Heart left ventricle (tissue), 16 donors: ENCODE measurements at regions of chr1 and their contacts with region 1.

Region 1: DNA sequence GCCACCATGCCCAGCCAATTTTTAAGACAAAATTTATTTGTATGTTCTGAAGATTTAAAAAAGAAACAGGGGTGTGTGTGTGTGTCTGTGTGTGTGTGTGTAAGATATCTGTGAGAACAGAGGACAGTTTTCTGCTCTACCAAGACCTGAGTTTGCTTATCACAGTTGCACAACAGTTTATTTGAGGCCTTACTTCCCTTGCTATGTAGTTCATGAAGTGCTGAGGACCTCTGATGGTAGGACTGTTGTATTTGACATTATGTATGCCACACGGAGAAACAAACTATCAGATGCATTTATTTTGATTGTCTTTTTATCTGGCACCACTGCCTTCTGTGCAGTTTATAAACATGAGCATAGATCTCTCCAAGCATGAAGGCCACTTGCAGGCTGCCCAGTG is 355.2 kb downstream of the PBX1 start:
- DNase-seq: no peak
- ATAC-seq: peak; percentile 79 to 84 (median 83)
- H3K4me3 ChIP-seq: no peak overlapping the region
- H3K27ac ChIP-seq: no peak overlapping the region
- H3K4me1 ChIP-seq: peaks cover 0 to 13% (median 0%) of the 10 kb centered on the region in 12 donors
- H3K27me3 ChIP-seq: no peaks in the 10 kb centered on the region
- CTCF ChIP-seq: peak in 9 of 12 donors; percentile 31 to 54 (median 43)
- POLR2A ChIP-seq: no peak

Region 2: DNA sequence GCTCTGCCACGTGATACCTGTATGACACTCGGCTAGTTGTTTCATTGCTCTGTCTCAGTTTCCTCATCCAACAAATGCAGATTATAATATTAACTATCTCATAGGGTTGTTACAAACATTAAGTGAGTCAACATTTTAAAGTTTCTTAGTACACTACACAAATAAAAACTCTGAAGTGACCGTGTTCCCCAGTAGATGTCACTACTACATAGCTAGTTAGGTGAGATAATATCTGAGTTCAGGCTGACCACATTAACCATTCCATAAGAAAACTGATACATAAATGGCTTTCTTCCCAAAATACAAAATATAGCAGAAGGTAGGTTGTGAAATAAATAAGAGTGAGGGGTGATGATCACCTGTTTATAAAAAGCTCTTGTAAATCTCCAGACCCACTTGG is 1378.4 kb before region 1 on chr1:
- intact Hi-C with region 1: loop called in 1 of 10 experiments (anchors 10 kb)
- DNase-seq: no peak
- ATAC-seq: peak in 1 of 4 donors; percentile 58
- H3K4me3 ChIP-seq: no peak overlapping the region
- H3K27ac ChIP-seq: no peak overlapping the region
- H3K4me1 ChIP-seq: peaks cover 0 to 5% (median 0%) of the 10 kb centered on the region in 12 donors
- H3K27me3 ChIP-seq: no peaks in the 10 kb centered on the region
- CTCF ChIP-seq: peak in 10 of 12 donors; percentile 11 to 43 (median 33)
- POLR2A ChIP-seq: no peak

Region 3: GRCh38 chr1:164433141-164433817 is 480.9 kb before region 1 on chr1:
- intact Hi-C with region 1: loop called in 1 of 10 experiments (anchors 10 kb)
- DNase-seq: no peak
- ATAC-seq: no peak
- H3K4me3 ChIP-seq: no peak overlapping the region
- H3K27ac ChIP-seq: no peak overlapping the region
- H3K4me1 ChIP-seq: no peaks in the 10 kb centered on the region
- H3K27me3 ChIP-seq: no peaks in the 10 kb centered on the region
- CTCF ChIP-seq: no peak
- POLR2A ChIP-seq: no peak

Region 4: GRCh38 chr1:164617377-164618201 is 296.6 kb before region 1 on chr1:
- intact Hi-C with region 1: loop called in 1 of 10 experiments (anchors 10 kb)
- DNase-seq: no peak
- ATAC-seq: no peak
- H3K4me3 ChIP-seq: no peak overlapping the region
- H3K27ac ChIP-seq: peak overlapping the region in 2 of 12 donors; percentile 35 to 73
- H3K4me1 ChIP-seq: peaks cover 4 to 91% (median 42%) of the 10 kb centered on the region in 12 donors
- H3K27me3 ChIP-seq: no peaks in the 10 kb centered on the region
- CTCF ChIP-seq: peak; percentile 18 to 58 (median 45)
- POLR2A ChIP-seq: no peak

Region 5: DNA sequence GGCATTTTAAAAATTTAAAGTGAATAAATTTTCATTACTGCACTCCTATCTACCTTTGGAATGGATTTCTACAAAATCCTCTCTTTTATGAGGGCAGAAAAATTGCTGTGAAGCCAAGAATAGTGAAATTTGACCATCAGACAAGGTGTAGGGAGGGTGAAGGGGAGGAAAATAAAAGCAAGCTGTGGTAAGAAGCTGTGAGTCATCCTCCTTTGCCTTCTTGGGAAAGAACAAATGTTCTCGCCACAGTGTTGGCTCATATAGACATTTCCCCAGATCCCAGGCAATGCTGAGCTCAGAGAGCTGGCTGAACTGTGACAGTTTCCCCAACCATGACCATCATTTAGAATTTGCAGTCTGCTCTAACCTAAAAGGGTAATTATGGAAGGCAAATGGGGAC is 119.9 kb before region 1 on chr1:
- intact Hi-C with region 1: loop called in 5 of 10 experiments (anchors 5 to 10 kb)
- DNase-seq: no peak
- ATAC-seq: peak; percentile 53 to 92 (median 78)
- H3K4me3 ChIP-seq: no peak overlapping the region
- H3K27ac ChIP-seq: peak overlapping the region in 3 of 12 donors; percentile 22 to 81 (median 42)
- H3K4me1 ChIP-seq: peaks cover 0 to 38% (median 4%) of the 10 kb centered on the region in 12 donors
- H3K27me3 ChIP-seq: no peaks in the 10 kb centered on the region
- CTCF ChIP-seq: no peak
- POLR2A ChIP-seq: no peak

Region 6: GRCh38 chr1:164836614-164837018 is 77.6 kb before region 1 on chr1:
- intact Hi-C with region 1: loop called in 2 of 10 experiments (anchors 5 kb)
- DNase-seq: peak in 3 of 5 donors; percentile 13 to 47 (median 25)
- ATAC-seq: peak; percentile 75 to 93 (median 86)
- H3K4me3 ChIP-seq: no peak overlapping the region
- H3K27ac ChIP-seq: peak overlapping the region in 11 of 12 donors; percentile 16 to 67 (median 52)
- H3K4me1 ChIP-seq: peaks cover 0 to 42% (median 15%) of the 10 kb centered on the region in 12 donors
- H3K27me3 ChIP-seq: no peaks in the 10 kb centered on the region
- CTCF ChIP-seq: no peak
- POLR2A ChIP-seq: no peak